ENCODE measurements at regions of chr1 and their contacts with region 1.

Region 1: GRCh38 chr1:202315576-202316168 is 26.1 kb downstream of the UBE2T start:
- ATAC-seq: peak; percentile 92 to 98 (median 98)
- H3K4me3 ChIP-seq: no peak overlapping the region
- H3K27ac ChIP-seq: no peak overlapping the region
- H3K4me1 ChIP-seq: no peaks in the 10 kb centered on the region

Region 2: GRCh38 chr1:201792534-201793305 is 523.0 kb before region 1 on chr1:
- in situ Hi-C with region 1: no loop called
- ATAC-seq: peak; percentile 79 to 98 (median 96)
- H3K4me3 ChIP-seq: no peak overlapping the region
- H3K27ac ChIP-seq: no peak overlapping the region
- H3K4me1 ChIP-seq: peaks cover 6 to 9% of the 10 kb centered on the region in 2 donors

Region 3: GRCh38 chr1:202170726-202171125 is 144.9 kb before region 1 on chr1:
- in situ Hi-C with region 1: loop called in 3 of 9 experiments (anchors 10 to 25 kb)
- ATAC-seq: no peak
- H3K4me3 ChIP-seq: no peak overlapping the region
- H3K27ac ChIP-seq: no peak overlapping the region
- H3K4me1 ChIP-seq: peaks cover 2 to 3% of the 10 kb centered on the region in 2 donors

Region 4: DNA sequence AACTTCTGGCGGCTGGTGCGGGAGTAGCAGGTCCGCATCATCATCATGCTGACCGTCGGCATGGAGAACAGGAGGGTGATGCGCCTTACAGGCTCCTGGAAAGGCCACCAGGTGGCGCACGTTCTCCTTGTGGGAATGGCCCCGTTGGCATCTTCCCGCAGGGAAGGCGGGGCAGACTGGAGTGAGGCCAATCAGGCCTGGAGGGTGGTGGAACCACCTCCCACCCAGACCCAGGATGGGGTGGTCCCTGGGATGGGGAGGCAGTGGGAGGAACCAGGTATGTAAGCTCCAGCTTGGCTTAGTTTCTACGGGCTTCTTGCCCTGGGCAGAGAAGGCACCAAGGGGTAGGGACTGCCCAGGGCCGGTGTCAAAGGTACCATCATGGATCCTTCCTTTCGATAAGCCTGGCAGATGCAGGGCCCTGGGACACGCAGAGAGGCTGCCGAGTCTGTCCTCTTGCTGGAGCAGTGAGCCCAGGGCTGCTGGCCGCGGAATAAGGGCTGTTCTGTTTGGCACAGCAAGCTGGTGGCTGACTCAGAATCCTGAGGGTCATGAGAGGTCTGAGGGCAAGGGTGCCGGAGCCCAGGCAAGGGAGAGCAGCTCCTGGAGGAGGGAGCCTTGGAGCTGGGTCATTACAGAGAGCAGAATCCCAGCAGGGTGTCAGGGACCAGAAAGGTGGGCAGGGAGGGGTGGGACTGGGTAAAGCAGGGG is 130.8 kb before region 1 on chr1:
- in situ Hi-C with region 1: loop called in 7 of 9 experiments (anchors 5 to 25 kb)
- ATAC-seq: peak; percentile 86 to 95 (median 89)
- H3K4me3 ChIP-seq: no peak overlapping the region
- H3K27ac ChIP-seq: no peak overlapping the region
- H3K4me1 ChIP-seq: peaks cover 0 to 11% of the 10 kb centered on the region in 2 donors

Region 5: GRCh38 chr1:202376247-202376646 is 60.6 kb after region 1 on chr1:
- in situ Hi-C with region 1: no loop called
- ATAC-seq: peak in 2 of 8 experiments; percentile 50 to 58
- H3K4me3 ChIP-seq: no peak overlapping the region
- H3K27ac ChIP-seq: no peak overlapping the region
- H3K4me1 ChIP-seq: no peaks in the 10 kb centered on the region